ENCODE measurements at regions of chr2 and their contacts with region 1.

Region 1: GRCh38 chr2:64586883-64587481 is 62.9 kb downstream of the AFTPH start:
- DNase-seq: peak in 1 of 2 experiments; percentile 33
- H3K4me3 ChIP-seq: no peak overlapping the region
- H3K4me3 Mint-ChIP-seq: no peak overlapping the region
- H3K27ac Mint-ChIP-seq: no peak overlapping the region
- H3K4me1 ChIP-seq: no peaks in the 10 kb centered on the region
- H3K4me1 Mint-ChIP-seq: no peaks in the 10 kb centered on the region
- H3K27me3 ChIP-seq: no peaks in the 10 kb centered on the region
- H3K27me3 Mint-ChIP-seq: no peaks in the 10 kb centered on the region
- CTCF ChIP-seq: peak; percentile 48 to 63

Region 2: DNA sequence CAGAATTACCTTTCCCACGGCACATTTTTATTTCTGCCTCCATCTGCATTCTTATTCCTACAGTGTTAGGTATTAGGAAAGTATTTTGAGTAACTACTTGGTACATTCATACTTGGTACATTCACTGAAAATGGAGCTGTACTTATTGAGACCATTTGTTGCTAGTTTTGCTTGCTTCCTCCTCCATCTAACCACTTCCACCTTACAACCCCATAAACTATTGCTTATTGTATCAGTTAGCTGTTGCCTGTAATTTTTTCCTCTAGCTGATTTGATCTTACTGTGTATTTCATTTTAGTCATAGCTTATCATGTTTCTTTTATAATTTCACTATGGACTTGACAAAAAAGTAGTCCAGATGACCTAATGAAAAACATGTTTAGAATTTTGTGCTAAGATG is 12.1 kb before region 1 on chr2:
- CTCF ChIA-PET with region 1: no interaction called
- POLR2A ChIA-PET with region 1: no interaction called
- intact Hi-C with region 1: no loop called
- DNase-seq: no peak
- H3K4me3 ChIP-seq: no peak overlapping the region
- H3K4me3 Mint-ChIP-seq: no peak overlapping the region
- H3K27ac Mint-ChIP-seq: no peak overlapping the region
- H3K4me1 ChIP-seq: no peaks in the 10 kb centered on the region
- H3K4me1 Mint-ChIP-seq: no peaks in the 10 kb centered on the region
- H3K27me3 ChIP-seq: no peaks in the 10 kb centered on the region
- H3K27me3 Mint-ChIP-seq: no peaks in the 10 kb centered on the region
- CTCF ChIP-seq: no peak

Region 3: GRCh38 chr2:64625299-64626145 is 38.5 kb after region 1 on chr2:
- CTCF ChIA-PET with region 1: interaction called, 7 read pairs
- POLR2A ChIA-PET with region 1: no interaction called
- intact Hi-C with region 1: loop called (anchors 1 kb)
- DNase-seq: peak in 1 of 2 experiments; percentile 57
- H3K4me3 ChIP-seq: no peak overlapping the region
- H3K4me3 Mint-ChIP-seq: no peak overlapping the region
- H3K27ac Mint-ChIP-seq: no peak overlapping the region
- H3K4me1 ChIP-seq: no peaks in the 10 kb centered on the region
- H3K4me1 Mint-ChIP-seq: peaks cover 7% of the 10 kb centered on the region
- H3K27me3 ChIP-seq: no peaks in the 10 kb centered on the region; the same call in 1 of the 2 replicates
- H3K27me3 Mint-ChIP-seq: no peaks in the 10 kb centered on the region
- CTCF ChIP-seq: peak; percentile 41 to 63

Region 4: DNA sequence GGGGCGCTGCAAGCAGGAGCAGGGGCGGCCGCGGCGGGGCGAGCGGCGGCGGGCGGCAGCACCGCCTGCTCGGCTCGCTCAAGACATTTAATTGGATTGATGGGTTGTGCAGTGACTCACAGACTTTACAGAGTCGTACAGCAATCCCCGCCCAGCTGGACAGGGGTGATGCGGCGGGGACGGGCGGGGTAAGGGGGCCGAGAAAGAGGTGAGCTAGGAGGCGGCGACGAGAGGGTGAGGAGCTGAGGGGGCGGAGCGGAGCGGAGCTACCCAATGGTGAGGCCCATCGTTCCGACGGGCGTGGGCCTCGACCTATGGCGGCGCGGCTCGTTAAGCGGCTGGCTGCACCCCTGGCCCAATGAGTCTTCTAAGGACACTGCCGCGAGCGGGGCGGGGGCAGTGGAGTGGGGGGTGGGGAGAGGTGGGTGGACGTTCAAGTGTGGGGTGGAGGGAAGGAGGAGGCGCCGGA is 163.9 kb after region 1 on chr2:
- CTCF ChIA-PET with region 1: no interaction called
- POLR2A ChIA-PET with region 1: interaction called, 5 read pairs
- intact Hi-C with region 1: loop called (anchors 1 kb)
- DNase-seq: peak; percentile 99
- H3K4me3 ChIP-seq: peak overlapping the region; percentile 73
- H3K4me3 Mint-ChIP-seq: peak overlapping the region; percentile 96
- H3K27ac Mint-ChIP-seq: peak overlapping the region; percentile 93
- H3K4me1 ChIP-seq: peaks cover 18% of the 10 kb centered on the region; the same call in 1 of the 2 replicates
- H3K4me1 Mint-ChIP-seq: peaks cover 16% of the 10 kb centered on the region
- H3K27me3 ChIP-seq: no peaks in the 10 kb centered on the region
- H3K27me3 Mint-ChIP-seq: no peaks in the 10 kb centered on the region
- CTCF ChIP-seq: no peak

Region 5: DNA sequence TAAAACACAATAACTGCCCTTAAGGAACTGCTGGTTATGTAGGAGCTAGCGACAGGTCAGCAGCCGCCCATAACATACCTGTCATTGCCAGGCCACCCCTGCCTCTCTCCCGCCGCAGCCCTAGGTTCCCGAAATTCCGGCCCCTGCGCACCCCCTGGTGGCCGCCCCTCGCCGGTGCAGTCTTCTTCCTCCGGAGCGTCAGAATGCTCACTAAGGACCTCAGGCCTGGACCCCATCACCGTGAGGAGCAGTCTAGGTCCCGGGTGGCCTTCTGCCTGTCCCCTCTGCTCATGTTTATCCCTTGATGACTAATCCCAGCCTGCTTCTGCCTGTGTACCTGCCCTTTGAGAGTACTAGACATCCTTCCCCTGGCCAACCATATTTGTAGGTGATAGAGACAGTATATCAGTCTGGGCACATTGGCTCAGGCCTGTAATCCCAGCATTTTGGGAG is 286.5 kb after region 1 on chr2:
- CTCF ChIA-PET with region 1: interaction called, 3 read pairs
- POLR2A ChIA-PET with region 1: no interaction called
- intact Hi-C with region 1: loop called (anchors 2 kb)
- DNase-seq: peak; percentile 78 to 91
- H3K4me3 ChIP-seq: no peak overlapping the region
- H3K4me3 Mint-ChIP-seq: no peak overlapping the region
- H3K27ac Mint-ChIP-seq: no peak overlapping the region
- H3K4me1 ChIP-seq: peaks cover 14% of the 10 kb centered on the region; the same call in 1 of the 2 replicates
- H3K4me1 Mint-ChIP-seq: peaks cover 14% of the 10 kb centered on the region
- H3K27me3 ChIP-seq: no peaks in the 10 kb centered on the region
- H3K27me3 Mint-ChIP-seq: no peaks in the 10 kb centered on the region
- CTCF ChIP-seq: peak; percentile 91 to 96

Measured in Caco-2 (cell line).